Spleen (tissue), 13 donors: ENCODE measurements at regions of chr20 and their contacts with region 1.

Region 1: GRCh38 chr20:51306503-51307358 is 235.8 kb downstream of the NFATC2 start:
- DNase-seq: peak; percentile 92
- H3K4me3 ChIP-seq: peak overlapping the region in 1 of 8 donors; percentile 15
- H3K27ac ChIP-seq: no peak overlapping the region
- H3K4me1 ChIP-seq: peaks cover 0 to 11% (median 7%) of the 10 kb centered on the region in 6 donors
- H3K27me3 ChIP-seq: peaks cover 0 to 18% (median 0%) of the 10 kb centered on the region in 7 donors
- CTCF ChIP-seq: peak; percentile 64 to 97 (median 93)
- POLR2A ChIP-seq: no peak

Region 2: GRCh38 chr20:50790651-50791277 is 516.0 kb before region 1 on chr20:
- intact Hi-C with region 1: loop called (anchors 10 kb)
- DNase-seq: peak; percentile 95
- H3K4me3 ChIP-seq: peak overlapping the region in 1 of 8 donors; percentile 55
- H3K27ac ChIP-seq: peak overlapping the region; percentile 14 to 86 (median 74)
- H3K4me1 ChIP-seq: peaks cover 12 to 44% (median 28%) of the 10 kb centered on the region in 6 donors
- H3K27me3 ChIP-seq: peaks cover 0 to 6% (median 0%) of the 10 kb centered on the region in 7 donors
- CTCF ChIP-seq: peak; percentile 44 to 86 (median 74)
- POLR2A ChIP-seq: no peak

Region 3: DNA sequence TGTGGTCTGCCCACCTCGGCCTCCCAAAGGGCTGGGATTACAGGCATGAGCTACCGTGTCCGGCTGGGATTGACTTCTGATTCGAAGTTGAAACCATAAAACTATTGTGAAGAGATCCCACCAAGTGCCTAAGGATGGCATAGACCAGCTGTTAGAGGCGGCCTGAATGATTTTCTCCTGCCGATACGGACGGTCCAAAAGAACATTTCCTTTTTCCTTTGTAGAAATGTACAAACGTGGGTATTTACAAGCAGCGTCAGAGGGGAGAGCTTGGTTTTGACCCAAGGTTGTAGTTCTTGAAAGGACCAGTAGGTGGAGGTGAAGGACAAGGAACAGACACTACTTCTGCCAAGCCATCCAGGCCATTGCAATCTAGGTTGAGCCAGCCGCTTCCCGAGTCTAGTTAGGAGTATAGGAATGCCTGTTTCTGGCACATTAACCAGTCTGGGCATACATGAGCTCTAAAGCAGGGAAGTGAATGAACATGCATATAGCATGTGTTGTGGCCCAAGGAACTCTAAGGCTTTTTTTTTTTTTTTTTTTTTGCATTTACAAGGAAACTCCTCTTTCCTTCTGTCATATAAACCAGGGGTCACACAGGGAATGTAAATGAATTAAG is 319.0 kb before region 1 on chr20:
- intact Hi-C with region 1: loop called (anchors 5 kb)
- DNase-seq: no peak
- H3K4me3 ChIP-seq: no peak overlapping the region
- H3K27ac ChIP-seq: peak overlapping the region in 1 of 8 donors; percentile 42
- H3K4me1 ChIP-seq: peaks cover 0 to 21% (median 2%) of the 10 kb centered on the region in 6 donors
- H3K27me3 ChIP-seq: peaks cover 0 to 48% (median 5%) of the 10 kb centered on the region in 7 donors
- CTCF ChIP-seq: peak; percentile 75 to 95 (median 90)
- POLR2A ChIP-seq: no peak

Region 4: GRCh38 chr20:51001758-51002157 is 305.0 kb before region 1 on chr20:
- intact Hi-C with region 1: loop called (anchors 5 kb)
- DNase-seq: no peak
- H3K4me3 ChIP-seq: no peak overlapping the region
- H3K27ac ChIP-seq: no peak overlapping the region
- H3K4me1 ChIP-seq: no peaks in the 10 kb centered on the region
- H3K27me3 ChIP-seq: peaks cover 0 to 31% (median 2%) of the 10 kb centered on the region in 7 donors
- CTCF ChIP-seq: no peak
- POLR2A ChIP-seq: no peak

Region 5: DNA sequence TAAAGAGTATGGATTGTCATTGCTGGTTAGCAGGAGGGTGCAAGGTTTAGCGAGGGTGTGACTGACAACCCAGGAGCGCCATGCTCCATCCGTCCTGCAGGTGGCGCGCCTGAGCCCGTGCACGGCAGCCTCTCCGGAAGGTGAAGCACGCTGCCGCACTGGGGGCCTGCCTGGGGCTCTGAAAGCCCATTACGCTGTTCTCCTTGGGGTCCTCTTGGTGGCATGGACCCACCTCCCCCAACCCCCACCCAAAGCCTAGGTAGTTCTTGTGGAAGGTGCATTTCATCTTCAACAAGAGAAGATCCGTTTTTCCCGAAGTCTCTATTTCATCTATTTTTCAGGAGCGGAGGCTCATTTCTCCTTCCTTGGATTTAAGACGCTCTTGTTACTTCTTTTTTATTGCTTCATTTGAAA is 86.4 kb before region 1 on chr20:
- intact Hi-C with region 1: loop called (anchors 5 kb)
- DNase-seq: peak; percentile 80
- H3K4me3 ChIP-seq: no peak overlapping the region
- H3K27ac ChIP-seq: no peak overlapping the region
- H3K4me1 ChIP-seq: peaks cover 0 to 8% (median 4%) of the 10 kb centered on the region in 6 donors
- H3K27me3 ChIP-seq: peaks cover 0 to 47% (median 17%) of the 10 kb centered on the region in 7 donors
- CTCF ChIP-seq: peak; percentile 27 to 81 (median 65)
- POLR2A ChIP-seq: no peak

Region 6: GRCh38 chr20:51456511-51457509 is 150.1 kb after region 1 on chr20:
- intact Hi-C with region 1: no loop called
- DNase-seq: peak; percentile 90
- H3K4me3 ChIP-seq: peak overlapping the region in 1 of 8 donors; percentile 8
- H3K27ac ChIP-seq: peak overlapping the region in 4 of 8 donors; percentile 29 to 54 (median 40)
- H3K4me1 ChIP-seq: peaks cover 14 to 45% (median 30%) of the 10 kb centered on the region in 6 donors
- H3K27me3 ChIP-seq: no peaks in the 10 kb centered on the region
- CTCF ChIP-seq: no peak
- POLR2A ChIP-seq: no peak